Thyroid gland (tissue), 4 donors: ENCODE measurements at regions of chr15 and their contacts with region 1.

Region 1: DNA sequence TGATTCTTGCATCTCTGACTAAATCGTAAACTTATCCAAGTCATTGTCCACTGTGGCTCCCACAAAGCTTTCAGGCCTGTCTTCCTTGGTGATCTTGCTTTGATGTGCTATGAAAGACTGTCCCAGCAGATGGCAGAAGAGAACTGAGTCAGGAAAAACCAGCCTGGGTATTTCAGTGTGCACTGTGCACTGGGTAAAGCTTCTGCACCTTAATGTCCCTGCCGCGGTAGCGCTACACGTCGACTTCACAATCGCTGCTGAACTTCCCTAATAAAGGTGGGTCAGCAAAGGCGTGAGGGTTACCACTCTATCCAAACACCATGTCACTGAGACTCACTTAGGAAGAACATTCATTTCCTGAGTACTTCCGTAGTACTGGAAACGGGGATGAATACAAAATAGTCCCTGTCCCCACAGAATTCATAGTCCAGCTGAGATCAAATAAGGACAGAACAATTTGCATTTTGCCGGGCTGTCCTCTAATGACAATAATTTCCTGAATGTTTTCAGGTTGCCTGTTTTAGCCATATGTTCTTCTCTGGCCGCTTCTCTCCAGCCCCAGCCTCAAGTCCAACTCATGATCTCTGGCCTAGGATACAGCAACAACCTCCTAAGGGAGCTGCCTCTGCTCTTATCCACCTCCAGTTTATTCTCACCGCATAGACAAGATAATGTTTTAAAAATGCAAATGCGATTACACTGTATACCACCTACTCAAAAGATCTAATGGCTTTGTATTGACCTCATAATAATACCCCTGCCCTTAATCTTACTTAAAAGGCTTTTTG is 83.6 kb upstream of the AKAP13 start:
- DNase-seq: peak; percentile 68
- H3K4me3 ChIP-seq: no peak overlapping the region
- H3K27ac ChIP-seq: no peak overlapping the region
- H3K4me1 ChIP-seq: peaks cover 4 to 6% of the 10 kb centered on the region in 2 donors
- H3K27me3 ChIP-seq: no peaks in the 10 kb centered on the region
- CTCF ChIP-seq: peak; percentile 37 to 83 (median 72)
- POLR2A ChIP-seq: no peak

Region 2: DNA sequence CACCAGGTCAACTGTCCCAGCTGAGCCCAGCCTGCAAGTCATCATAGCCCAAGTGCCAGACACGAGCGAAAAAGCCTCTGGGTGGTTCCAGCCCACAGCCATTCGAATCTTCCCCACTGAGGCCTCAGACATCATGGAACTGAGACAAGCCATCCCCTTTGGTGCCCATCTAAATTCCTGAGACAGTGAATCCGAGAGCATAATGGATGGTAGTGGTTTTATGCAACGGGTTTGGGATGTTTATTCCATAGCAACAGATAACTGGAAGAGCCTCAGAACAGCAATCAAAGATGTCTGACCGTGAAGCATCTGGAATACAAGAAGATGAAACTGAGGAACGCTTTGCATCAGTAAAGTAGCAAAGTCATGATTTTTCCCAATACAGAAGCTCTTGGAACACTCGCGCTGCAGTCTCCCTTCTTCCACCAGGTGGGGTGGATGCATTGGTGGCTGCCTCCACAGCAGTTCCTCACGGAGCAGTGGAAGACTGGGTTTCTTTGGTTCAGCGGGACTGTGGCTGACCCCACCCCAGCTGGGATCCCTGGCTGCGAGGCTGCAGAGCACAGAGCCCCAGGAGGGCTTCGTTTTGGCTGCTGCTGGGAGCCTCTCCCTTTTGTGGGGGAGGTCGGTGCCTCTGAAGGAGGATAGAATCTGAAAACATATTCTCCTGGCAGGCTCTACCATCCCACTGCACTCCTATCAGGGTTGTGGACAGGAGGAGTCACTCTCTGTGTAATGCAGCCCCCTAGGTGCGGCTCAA is 341.5 kb before region 1 on chr15:
- intact Hi-C with region 1: loop called (anchors 10 kb)
- DNase-seq: peak; percentile 73 to 77
- H3K4me3 ChIP-seq: peak overlapping the region in 1 of 3 donors; percentile 6
- H3K27ac ChIP-seq: no peak overlapping the region
- H3K4me1 ChIP-seq: peaks cover 3 to 5% of the 10 kb centered on the region in 2 donors
- H3K27me3 ChIP-seq: no peaks in the 10 kb centered on the region
- CTCF ChIP-seq: peak; percentile 53 to 85 (median 75)
- POLR2A ChIP-seq: no peak

Region 3: DNA sequence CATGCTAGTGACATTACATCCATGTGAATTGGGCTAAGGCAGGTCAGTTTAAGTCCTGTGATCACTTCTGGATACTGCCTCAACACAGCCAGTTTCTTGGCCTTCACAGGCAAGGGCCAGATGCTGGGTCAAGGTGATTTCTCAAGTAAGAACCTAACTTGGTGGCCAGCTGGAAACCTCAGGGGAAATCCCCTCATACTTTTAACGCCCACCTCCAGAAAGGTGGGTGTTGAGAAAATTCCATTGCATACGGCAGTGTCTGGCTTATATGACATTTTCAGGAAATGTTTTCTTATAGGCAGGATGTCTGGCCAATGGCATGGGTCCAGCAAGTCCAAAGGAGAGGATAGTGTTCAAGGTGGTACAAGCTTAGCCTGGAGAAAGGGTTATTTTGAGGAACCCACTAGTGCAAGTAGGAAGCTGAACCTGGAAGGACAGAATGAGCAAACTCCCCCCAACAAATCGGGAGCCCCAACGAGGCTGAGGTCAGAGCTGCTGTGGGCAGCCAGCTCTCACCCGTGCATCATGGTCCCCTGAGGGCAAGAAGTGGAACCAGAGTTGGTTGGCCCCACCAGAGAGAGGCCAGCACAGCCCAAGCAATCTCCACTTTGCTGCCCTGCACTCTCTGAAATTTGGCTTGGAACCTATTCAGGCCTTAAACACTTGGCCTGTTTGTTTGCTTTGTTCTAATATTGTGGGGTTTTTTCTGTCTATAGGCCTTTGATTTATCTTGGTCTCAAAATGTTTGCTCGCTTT is 179.7 kb before region 1 on chr15:
- intact Hi-C with region 1: no loop called
- DNase-seq: no peak
- H3K4me3 ChIP-seq: no peak overlapping the region
- H3K27ac ChIP-seq: no peak overlapping the region
- H3K4me1 ChIP-seq: peaks cover 6 to 8% of the 10 kb centered on the region in 2 donors
- H3K27me3 ChIP-seq: no peaks in the 10 kb centered on the region
- CTCF ChIP-seq: no peak
- POLR2A ChIP-seq: no peak

Region 4: DNA sequence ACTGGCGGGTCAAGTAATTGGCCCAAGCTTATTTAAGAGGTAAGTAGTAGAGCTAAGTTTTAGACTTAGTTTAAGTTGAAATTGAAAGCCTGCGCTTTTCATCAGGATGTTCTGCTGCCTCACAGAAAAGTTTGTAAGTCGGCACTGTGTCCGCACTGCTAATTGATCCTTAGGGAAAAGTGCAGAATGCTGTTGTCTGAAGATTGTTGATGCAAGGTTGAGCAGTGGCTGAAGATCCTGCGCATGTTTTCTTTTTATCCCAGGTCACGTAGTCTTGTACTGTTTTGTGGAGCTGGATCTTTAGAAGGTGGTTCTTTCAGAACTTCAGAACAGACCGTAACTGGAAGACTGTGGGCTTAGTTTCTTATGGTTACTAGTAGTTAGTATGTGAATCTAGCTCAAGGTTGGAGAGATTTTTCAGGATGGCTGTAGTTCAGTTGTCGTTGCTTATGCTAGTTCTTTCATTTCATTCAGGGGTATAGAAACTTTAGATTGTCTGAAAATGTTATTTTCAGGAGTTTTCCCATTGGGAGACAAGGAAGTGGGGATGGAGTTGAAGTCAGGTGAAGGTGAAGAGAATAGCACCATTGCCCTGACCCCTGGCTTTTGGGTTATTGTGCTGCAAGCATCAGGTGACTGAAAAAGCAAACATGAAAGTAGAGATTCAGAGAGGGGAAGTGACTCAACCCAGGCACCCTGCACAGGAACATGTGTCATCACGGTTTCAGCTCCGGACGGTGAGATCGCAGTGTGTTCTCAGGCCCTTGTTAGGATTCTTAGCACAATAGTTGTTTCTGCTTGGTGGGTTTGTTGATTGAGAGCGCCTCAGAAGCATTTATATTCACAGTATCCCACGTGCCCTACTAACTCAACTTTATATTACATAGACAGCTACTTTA is 116.4 kb after region 1 on chr15:
- intact Hi-C with region 1: loop called (anchors 10 kb)
- DNase-seq: peak; percentile 84 to 85
- H3K4me3 ChIP-seq: no peak overlapping the region
- H3K27ac ChIP-seq: peak overlapping the region; percentile 40 to 83 (median 65)
- H3K4me1 ChIP-seq: peaks cover 15 to 49% of the 10 kb centered on the region in 2 donors
- H3K27me3 ChIP-seq: no peaks in the 10 kb centered on the region
- CTCF ChIP-seq: no peak
- POLR2A ChIP-seq: peak in 1 of 2 donors; percentile 28

Region 5: GRCh38 chr15:85618956-85619491 is 322.2 kb after region 1 on chr15:
- intact Hi-C with region 1: no loop called
- DNase-seq: peak in 1 of 2 donors; percentile 31
- H3K4me3 ChIP-seq: peak overlapping the region in 1 of 3 donors; percentile 23
- H3K27ac ChIP-seq: peak overlapping the region in 2 of 3 donors; percentile 65 to 77
- H3K4me1 ChIP-seq: peaks cover 38 to 68% of the 10 kb centered on the region in 2 donors
- H3K27me3 ChIP-seq: no peaks in the 10 kb centered on the region
- CTCF ChIP-seq: no peak
- POLR2A ChIP-seq: peak in 1 of 2 donors; percentile 33

Region 6: GRCh38 chr15:85831415-85832113 is 534.8 kb after region 1 on chr15:
- intact Hi-C with region 1: loop called (anchors 10 kb)
- DNase-seq: peak; percentile 69 to 72
- H3K4me3 ChIP-seq: no peak overlapping the region
- H3K27ac ChIP-seq: no peak overlapping the region
- H3K4me1 ChIP-seq: no peaks in the 10 kb centered on the region
- H3K27me3 ChIP-seq: no peaks in the 10 kb centered on the region
- CTCF ChIP-seq: peak in 5 of 6 experiments; percentile 42 to 62 (median 60)
- POLR2A ChIP-seq: no peak